Activated T-helper 1 cell treated with anti-CD3 and anti-CD28 coated beads, Interleukin-12 subunit alpha, Interleukin-12 subunit beta, Interleukin-2, Interleukin-4 antibody, amounts not matched to agents 30 ng/mL and 10 ng/mL and 1 ng/mL, durations not matched to agents 14 hours and 24 hours and 36 hours (primary cell): ENCODE measurements at regions of chr17 and their contacts with region 1.

Region 1: GRCh38 chr17:7687908-7688807 is at the start of gene WRAP53:
- DNase-seq: peak; percentile 94
- H3K4me3 Mint-ChIP-seq: peak within 1 kb of the TSS; percentile 95
- H3K27ac Mint-ChIP-seq: peak within 1 kb of the TSS; percentile 96
- H3K4me1 Mint-ChIP-seq: peaks cover 40% of the 10 kb centered on the region
- H3K27me3 Mint-ChIP-seq: no peaks in the 10 kb centered on the region
- total RNA-seq, gene WRAP53: 31.5 TPM in 2 replicates

Region 2: GRCh38 chr17:7214300-7215135 is 473.6 kb before region 1 on chr17:
- intact Hi-C with region 1: loop called (anchors 2 kb)
- DNase-seq: peak; percentile 99
- H3K4me3 Mint-ChIP-seq: peak overlapping the region; percentile 91
- H3K27ac Mint-ChIP-seq: peak overlapping the region; percentile 98
- H3K4me1 Mint-ChIP-seq: peaks cover 55% of the 10 kb centered on the region
- H3K27me3 Mint-ChIP-seq: peaks cover 14% of the 10 kb centered on the region

Region 3: GRCh38 chr17:7403977-7404736 is 284.0 kb before region 1 on chr17 and contains the start of gene TMEM256:
- intact Hi-C with region 1: loop called (anchors 1 kb)
- DNase-seq: peak; percentile 94
- H3K4me3 Mint-ChIP-seq: peak within 1 kb of the TSS; percentile 92
- H3K27ac Mint-ChIP-seq: peak within 1 kb of the TSS; percentile 95
- H3K4me1 Mint-ChIP-seq: peaks cover 13% of the 10 kb centered on the region
- H3K27me3 Mint-ChIP-seq: peaks cover 21% of the 10 kb centered on the region
- total RNA-seq, gene TMEM256: 53.5 and 54.7 TPM in 2 replicates

Region 4: DNA sequence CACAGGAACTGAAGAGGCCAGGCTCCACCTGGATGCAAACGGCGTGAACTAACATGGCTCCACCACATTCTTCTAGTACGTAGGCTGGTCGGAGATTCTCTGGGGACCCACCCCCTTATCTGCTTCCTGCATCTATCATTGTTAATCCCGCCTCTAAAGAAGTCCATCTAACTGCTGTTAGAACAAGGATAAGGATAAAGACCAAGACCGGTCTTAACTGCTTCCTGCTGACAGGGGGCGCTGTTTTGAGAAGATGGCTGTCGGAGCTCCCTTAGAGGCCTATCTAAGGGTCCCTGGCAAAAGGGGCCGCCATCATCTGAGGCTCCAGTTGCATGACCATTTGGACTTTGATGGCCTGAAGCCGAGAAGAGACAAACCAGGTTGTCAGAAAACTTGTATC is 165.1 kb before region 1 on chr17:
- intact Hi-C with region 1: loop called (anchors 2 kb)
- DNase-seq: peak; percentile 29
- H3K4me3 Mint-ChIP-seq: no peak overlapping the region
- H3K27ac Mint-ChIP-seq: no peak overlapping the region
- H3K4me1 Mint-ChIP-seq: no peaks in the 10 kb centered on the region
- H3K27me3 Mint-ChIP-seq: no peaks in the 10 kb centered on the region

Region 5: DNA sequence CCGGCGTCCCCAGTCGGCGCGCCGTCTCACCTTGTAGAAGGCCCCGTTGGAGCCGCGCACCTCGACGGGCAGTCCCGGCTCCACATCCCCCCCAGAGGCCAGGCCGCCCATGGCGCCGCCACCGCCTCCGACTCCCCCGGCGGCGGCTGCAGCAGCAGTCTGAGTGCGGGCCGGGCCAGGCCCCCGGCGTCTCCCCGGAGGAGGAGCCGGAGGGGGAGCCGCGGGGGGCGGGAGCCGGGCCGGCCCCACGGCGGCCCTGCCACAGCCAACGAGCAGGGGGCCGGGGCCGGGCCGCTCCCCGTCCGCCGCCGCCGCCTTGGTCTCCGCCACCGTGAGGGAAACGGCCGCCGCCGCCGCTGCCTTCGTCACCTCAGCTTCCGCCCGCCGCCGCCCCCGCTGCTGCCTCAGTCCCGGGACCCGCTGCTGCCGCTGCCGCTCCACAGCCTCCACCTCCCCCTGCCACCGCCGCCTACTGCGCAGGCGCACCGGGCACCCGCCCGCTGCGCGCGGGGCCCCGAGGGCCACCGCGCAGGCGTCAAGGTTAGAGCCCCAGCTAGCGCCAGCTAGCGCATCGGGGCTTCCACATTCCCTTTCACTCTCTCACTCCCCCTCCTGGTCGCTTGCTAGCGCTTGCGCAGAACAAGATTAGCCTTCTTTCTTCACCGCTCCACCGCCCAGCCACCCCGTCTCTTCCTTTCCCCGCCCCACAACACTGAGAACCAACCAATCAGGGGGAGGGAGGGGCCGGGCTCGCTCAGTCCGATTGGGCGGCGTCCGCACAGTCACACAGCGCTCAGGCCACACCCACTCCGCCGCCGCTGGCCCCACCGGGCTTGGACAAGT is 73.5 kb before region 1 on chr17 and contains the start of gene FXR2:
- intact Hi-C with region 1: loop called (anchors 1 kb)
- DNase-seq: peak; percentile 99
- H3K4me3 Mint-ChIP-seq: peak within 1 kb of the TSS; percentile 85
- H3K27ac Mint-ChIP-seq: peak within 1 kb of the TSS; percentile 89
- H3K4me1 Mint-ChIP-seq: peaks cover 39% of the 10 kb centered on the region
- H3K27me3 Mint-ChIP-seq: no peaks in the 10 kb centered on the region
- total RNA-seq, gene FXR2: 59.5 and 63.6 TPM in 2 replicates

Region 6: DNA sequence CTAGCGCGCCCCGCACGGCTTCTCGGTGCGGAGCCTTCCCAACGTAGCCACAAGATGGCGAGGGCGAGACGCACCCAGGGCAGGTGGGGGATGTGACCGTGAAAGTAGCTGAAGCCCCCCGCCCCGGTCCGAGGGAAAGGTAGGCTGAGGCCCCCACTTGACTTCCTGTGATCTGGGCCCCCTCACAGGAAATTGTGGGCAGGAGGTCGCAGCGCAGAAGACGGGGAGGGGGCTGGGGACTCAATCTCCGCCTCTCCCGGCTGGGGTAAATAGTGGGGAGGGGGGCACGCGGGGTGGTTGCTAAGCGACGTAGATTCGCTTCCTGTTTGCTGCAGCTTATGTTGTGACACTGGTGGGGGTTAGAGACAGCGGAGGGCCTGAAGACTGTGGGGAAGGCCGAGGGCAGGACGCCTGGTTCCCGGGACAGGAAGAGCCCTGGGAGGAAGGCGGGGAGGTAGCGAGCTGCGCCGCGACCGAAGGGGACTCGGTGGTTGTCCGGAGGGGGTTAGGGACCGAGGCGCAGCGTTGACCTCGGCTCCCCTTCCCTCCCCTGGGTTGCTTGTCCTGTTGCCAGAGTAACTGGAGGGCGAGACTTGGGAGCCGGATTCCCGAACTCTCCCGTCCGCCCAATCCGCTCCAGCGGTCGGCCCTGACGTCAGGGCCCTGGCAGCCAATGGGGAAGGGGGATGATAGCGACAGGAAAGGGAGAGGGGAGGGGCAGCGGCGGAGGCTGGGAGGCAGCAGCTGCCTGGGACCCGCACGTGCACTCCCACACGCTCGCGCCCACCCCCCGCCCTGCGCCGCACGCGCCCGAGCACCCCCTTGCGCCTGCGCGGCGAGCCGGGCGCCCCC is 147.0 kb after region 1 on chr17:
- intact Hi-C with region 1: loop called (anchors 2 kb)
- DNase-seq: peak; percentile 75
- H3K4me3 Mint-ChIP-seq: peak overlapping the region; percentile 96
- H3K27ac Mint-ChIP-seq: peak overlapping the region; percentile 96
- H3K4me1 Mint-ChIP-seq: peaks cover 46% of the 10 kb centered on the region
- H3K27me3 Mint-ChIP-seq: peaks cover 17% of the 10 kb centered on the region

Region 7: DNA sequence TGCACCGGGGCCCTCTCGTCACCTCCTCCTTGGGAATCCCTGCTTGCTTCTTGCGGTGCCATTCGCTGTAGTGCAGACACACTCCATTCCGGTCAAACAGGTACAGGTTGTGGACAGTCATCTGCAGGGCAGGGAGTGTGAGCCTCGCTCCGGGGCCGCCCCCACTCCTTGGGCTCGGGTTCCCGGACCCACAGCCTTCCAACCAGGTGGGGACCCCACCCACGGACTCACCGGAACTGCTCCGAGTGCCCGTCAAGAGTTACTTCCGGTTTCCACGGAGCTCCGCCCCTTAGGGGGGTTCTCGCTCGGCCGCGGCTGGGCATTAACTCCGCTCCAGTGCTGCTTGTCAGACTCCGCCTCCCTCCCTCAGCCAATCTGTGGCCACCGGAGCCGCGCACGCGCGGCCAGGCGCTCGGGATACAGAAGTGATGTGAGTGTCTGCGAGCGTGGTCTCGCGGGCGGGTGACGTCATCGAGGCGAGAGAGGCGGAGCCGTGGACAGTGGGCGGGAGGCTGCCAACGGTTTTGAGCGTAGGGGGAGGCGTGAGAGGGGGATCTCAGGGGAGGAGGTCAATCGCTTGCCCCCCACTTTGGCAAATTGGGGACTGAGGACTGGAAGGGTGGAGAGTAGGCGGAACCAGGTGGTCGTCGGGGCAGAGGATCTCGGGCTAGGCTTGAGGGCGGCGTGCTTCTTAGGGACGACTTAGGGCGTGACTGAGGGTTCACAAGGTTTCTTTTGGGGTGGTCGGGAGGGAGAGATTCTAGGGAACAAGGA is 243.7 kb after region 1 on chr17 and contains the starts of genes CNTROB and TRAPPC1:
- intact Hi-C with region 1: loop called (anchors 1 kb)
- DNase-seq: peak; percentile 100
- H3K4me3 Mint-ChIP-seq: peak within 1 kb of the TSS; percentile 99
- H3K27ac Mint-ChIP-seq: peak within 1 kb of the TSS; percentile 99
- H3K4me1 Mint-ChIP-seq: peaks cover 42% of the 10 kb centered on the region
- H3K27me3 Mint-ChIP-seq: no peaks in the 10 kb centered on the region
- total RNA-seq, gene CNTROB: 53.5 and 54.7 TPM in 2 replicates
- total RNA-seq, gene TRAPPC1: 153 and 162 TPM in 2 replicates